GM12878 (cell line): ENCODE measurements at regions of chr20 and their contacts with region 1.

Region 1: GRCh38 chr20:46411637-46412036 is 5.2 kb upstream of the ELMO2 start:
- DNase-seq: no peak
- ATAC-seq: no peak
- H3K4me3 ChIP-seq: no peak overlapping the region
- H3K27ac ChIP-seq: no peak overlapping the region
- H3K4me1 ChIP-seq: peaks cover 10% of the 10 kb centered on the region
- H3K27me3 ChIP-seq: peaks cover 0 to 1% of the 10 kb centered on the region in 2 experiments; a peak in 2 of 4 replicates
- CTCF ChIP-seq: no peak
- EP300 ChIP-seq: no peak
- POLR2A ChIP-seq: no peak
- RAD21 ChIP-seq: no peak

Region 2: DNA sequence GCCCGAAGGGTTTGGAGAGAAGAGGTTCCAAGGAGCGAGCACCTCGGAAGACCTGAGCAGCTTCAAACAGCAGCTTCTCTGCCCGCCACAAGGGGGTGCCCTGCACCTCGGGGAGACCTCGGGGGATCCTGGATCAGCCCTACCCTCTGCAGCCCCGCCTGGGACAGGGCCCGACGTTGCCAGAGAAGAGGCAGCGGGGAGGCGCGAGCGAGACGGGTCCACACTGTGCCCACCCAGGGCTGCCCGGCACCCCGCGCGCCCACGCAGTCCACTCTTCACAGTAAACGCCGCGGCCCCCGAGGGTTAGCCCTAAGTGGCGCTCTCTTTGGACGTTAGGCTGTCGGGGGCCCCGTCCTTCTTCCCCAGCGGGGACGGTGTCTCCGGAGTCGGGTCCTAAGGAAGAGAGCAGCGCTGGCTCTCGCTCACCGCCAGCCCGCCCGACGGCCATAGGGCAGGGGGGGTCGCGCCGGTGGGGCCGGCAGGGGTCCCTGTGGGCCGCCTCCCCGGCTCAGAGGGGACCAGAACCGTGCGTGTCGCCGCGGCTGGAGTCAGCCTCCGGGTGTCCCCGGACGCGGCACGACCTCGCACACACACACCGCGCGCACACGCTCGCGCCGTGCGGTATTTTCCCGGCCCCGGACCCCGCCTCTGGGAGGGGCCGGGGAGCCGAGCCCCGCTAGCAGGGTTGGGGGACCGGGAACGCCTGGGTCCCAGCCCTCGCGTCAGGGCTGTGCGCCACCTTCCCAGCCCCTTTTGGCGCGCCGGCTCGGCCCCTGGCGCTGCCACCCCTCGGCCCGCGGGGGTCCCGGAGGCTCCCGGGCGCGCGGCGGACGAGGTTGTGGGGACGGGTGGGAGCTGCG is 104.3 kb before region 1 on chr20:
- CTCF ChIA-PET with region 1: interaction called, 19 read pairs
- POLR2A ChIA-PET with region 1: no interaction called
- RAD21 ChIA-PET with region 1: interaction called, 7 read pairs
- SMC1A ChIA-PET with region 1: interaction called, 5 read pairs
- in situ Hi-C with region 1: no loop called
- intact Hi-C with region 1: loop called (anchors 1 kb)
- DNase-seq: no peak
- ATAC-seq: peak; percentile 96
- H3K4me3 ChIP-seq: no peak overlapping the region; the same call in 1 of the 2 replicates
- H3K27ac ChIP-seq: no peak overlapping the region
- H3K4me1 ChIP-seq: no peaks in the 10 kb centered on the region
- H3K27me3 ChIP-seq: peaks cover 7 to 21% of the 10 kb centered on the region in 2 experiments
- CTCF ChIP-seq: peak; percentile 87 to 95 (median 91)
- EP300 ChIP-seq: no peak
- POLR2A ChIP-seq: no peak
- RAD21 ChIP-seq: peak; percentile 86